Heart left ventricle (tissue), 16 donors: ENCODE measurements at regions of chr3 and their contacts with region 1.

Region 1: DNA sequence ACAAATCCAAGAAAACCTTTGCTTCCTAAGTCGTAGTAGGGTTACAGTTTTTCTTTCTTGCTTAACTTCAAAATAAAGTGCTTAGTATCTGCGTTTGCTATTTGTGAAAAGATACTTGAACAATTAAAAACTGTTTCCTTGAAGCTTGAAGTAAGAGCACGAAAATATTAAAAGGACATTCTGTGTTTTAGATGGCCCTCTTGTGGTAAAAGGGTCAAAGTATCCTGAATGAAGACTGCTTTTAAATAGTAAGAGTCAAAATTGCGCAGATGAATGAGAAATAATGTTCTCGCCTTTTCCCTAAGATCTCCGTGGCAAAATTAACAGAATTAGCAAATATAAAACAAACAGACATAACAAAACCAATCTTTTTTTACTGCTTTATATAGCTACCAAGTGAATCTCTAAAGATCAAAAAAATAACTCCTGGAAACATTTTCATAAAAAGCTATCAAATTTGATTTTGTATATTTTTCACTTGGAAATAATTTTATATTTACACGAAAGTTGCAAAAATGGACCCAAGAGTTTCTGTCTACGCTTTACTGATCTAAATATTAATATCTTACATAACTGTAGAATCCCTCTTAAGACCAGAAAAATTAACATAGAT is 175.4 kb downstream of the MBNL1 start:
- DNase-seq: no peak
- ATAC-seq: peak in 3 of 4 donors; percentile 48 to 68 (median 65)
- H3K4me3 ChIP-seq: no peak overlapping the region
- H3K27ac ChIP-seq: peak overlapping the region in 7 of 12 donors; percentile 7 to 45 (median 26)
- H3K4me1 ChIP-seq: peaks cover 0 to 78% (median 42%) of the 10 kb centered on the region in 12 donors
- H3K27me3 ChIP-seq: no peaks in the 10 kb centered on the region
- CTCF ChIP-seq: peak; percentile 52 to 80 (median 76)
- POLR2A ChIP-seq: no peak

Region 2: GRCh38 chr3:152183473-152183872 is 260.7 kb before region 1 on chr3:
- intact Hi-C with region 1: loop called (anchors 1 to 10 kb)
- DNase-seq: peak in 4 of 5 donors; percentile 30 to 53 (median 39)
- ATAC-seq: peak; percentile 58 to 83 (median 66)
- H3K4me3 ChIP-seq: no peak overlapping the region
- H3K27ac ChIP-seq: no peak overlapping the region
- H3K4me1 ChIP-seq: peaks cover 0 to 10% (median 0%) of the 10 kb centered on the region in 12 donors
- H3K27me3 ChIP-seq: no peaks in the 10 kb centered on the region
- CTCF ChIP-seq: peak; percentile 45 to 78 (median 62)
- POLR2A ChIP-seq: no peak

Region 3: GRCh38 chr3:152229692-152230091 is 214.4 kb before region 1 on chr3:
- intact Hi-C with region 1: loop called in 6 of 10 experiments (anchors 2 to 10 kb)
- DNase-seq: no peak
- ATAC-seq: peak in 3 of 4 donors; percentile 47 to 77 (median 59)
- H3K4me3 ChIP-seq: no peak overlapping the region
- H3K27ac ChIP-seq: no peak overlapping the region
- H3K4me1 ChIP-seq: peaks cover 0 to 6% (median 0%) of the 10 kb centered on the region in 12 donors
- H3K27me3 ChIP-seq: no peaks in the 10 kb centered on the region
- CTCF ChIP-seq: peak in 10 of 12 donors; percentile 8 to 61 (median 49)
- POLR2A ChIP-seq: no peak

Region 4: DNA sequence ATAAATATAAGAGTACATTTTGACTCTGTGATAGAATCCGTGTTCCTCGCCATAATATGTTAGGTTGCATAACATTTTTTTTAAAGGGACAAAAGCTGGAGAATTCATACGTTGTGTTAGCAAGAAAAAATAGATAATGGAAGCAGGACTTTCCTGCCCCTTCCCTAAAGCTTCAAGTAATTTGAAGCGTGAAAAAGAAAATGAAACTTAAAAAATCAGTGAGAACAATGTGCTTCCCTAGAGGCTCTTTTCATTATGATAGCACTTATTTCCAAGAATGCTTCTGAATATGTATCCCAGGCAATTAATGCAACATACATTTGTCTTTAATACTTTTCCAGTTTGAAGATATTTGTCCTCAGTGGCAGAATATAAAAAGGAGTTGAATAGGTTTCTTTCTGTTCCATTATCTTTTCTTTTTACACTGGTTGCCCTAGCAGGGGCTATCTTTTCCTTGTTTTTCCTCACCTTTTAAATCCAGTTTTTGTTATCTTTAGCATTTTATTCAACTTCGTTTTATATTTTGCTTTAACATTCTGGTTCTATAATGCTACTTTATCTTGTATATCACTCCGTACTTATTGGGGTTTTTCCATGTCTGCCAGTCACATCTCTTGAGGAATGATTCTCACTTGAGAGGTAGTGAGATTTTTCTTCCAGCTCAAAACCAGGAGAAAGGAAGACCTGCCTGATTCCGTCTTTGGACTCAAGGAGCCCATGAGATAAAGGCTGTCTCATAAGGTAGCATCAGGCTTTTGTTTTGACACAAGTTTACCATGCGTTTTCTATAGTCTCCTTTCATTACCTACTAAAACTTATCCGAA is 61.6 kb before region 1 on chr3:
- intact Hi-C with region 1: loop called in 1 of 10 experiments (anchors 5 kb)
- DNase-seq: no peak
- ATAC-seq: peak in 2 of 4 donors; percentile 32 to 48
- H3K4me3 ChIP-seq: peak overlapping the region in 10 of 12 donors; percentile 3 to 54 (median 36)
- H3K27ac ChIP-seq: peak overlapping the region; percentile 23 to 81 (median 72)
- H3K4me1 ChIP-seq: peaks cover 14 to 98% (median 87%) of the 10 kb centered on the region in 12 donors
- H3K27me3 ChIP-seq: no peaks in the 10 kb centered on the region
- CTCF ChIP-seq: no peak
- POLR2A ChIP-seq: no peak